ENCODE measurements at regions of chr1 and their contacts with region 1.

Region 1: GRCh38 chr1:57424231-57425027 is 569 bp upstream of the DAB1 start:
- DNase-seq: no peak
- H3K4me3 ChIP-seq: peak overlapping the region; percentile 36 to 42 (median 38)
- H3K27ac ChIP-seq: no peak overlapping the region
- H3K4me1 ChIP-seq: peaks cover 15% of the 10 kb centered on the region
- H3K27me3 ChIP-seq: peaks cover 50% of the 10 kb centered on the region
- CTCF ChIP-seq: peak; percentile 53 to 76

Region 2: GRCh38 chr1:57824535-57824934 is 400.1 kb after region 1 on chr1:
- CTCF ChIA-PET with region 1: no interaction called
- dilution Hi-C with region 1: no loop called
- in situ Hi-C with region 1: no loop called
- intact Hi-C with region 1: loop called (anchors 10 kb)
- DNase-seq: peak; percentile 63
- H3K4me3 ChIP-seq: no peak overlapping the region
- H3K27ac ChIP-seq: no peak overlapping the region
- H3K4me1 ChIP-seq: peaks cover 10% of the 10 kb centered on the region
- H3K27me3 ChIP-seq: no peaks in the 10 kb centered on the region
- CTCF ChIP-seq: no peak

Region 3: GRCh38 chr1:58047265-58047858 is 622.9 kb after region 1 on chr1:
- CTCF ChIA-PET with region 1: no interaction called
- dilution Hi-C with region 1: no loop called
- in situ Hi-C with region 1: no loop called
- intact Hi-C with region 1: loop called (anchors 2 kb)
- DNase-seq: no peak
- H3K4me3 ChIP-seq: no peak overlapping the region
- H3K27ac ChIP-seq: no peak overlapping the region
- H3K4me1 ChIP-seq: peaks cover under 1% of the 10 kb centered on the region
- H3K27me3 ChIP-seq: peaks cover 6% of the 10 kb centered on the region
- CTCF ChIP-seq: peak; percentile 79 to 85

Measured in mammary epithelial cell (primary cell).